Activated CD8-positive, alpha-beta T cell treated with anti-CD3 and anti-CD28 coated beads for 36 hours (primary cell): ENCODE measurements at regions of chr12 and their contacts with region 1.

Region 1: DNA sequence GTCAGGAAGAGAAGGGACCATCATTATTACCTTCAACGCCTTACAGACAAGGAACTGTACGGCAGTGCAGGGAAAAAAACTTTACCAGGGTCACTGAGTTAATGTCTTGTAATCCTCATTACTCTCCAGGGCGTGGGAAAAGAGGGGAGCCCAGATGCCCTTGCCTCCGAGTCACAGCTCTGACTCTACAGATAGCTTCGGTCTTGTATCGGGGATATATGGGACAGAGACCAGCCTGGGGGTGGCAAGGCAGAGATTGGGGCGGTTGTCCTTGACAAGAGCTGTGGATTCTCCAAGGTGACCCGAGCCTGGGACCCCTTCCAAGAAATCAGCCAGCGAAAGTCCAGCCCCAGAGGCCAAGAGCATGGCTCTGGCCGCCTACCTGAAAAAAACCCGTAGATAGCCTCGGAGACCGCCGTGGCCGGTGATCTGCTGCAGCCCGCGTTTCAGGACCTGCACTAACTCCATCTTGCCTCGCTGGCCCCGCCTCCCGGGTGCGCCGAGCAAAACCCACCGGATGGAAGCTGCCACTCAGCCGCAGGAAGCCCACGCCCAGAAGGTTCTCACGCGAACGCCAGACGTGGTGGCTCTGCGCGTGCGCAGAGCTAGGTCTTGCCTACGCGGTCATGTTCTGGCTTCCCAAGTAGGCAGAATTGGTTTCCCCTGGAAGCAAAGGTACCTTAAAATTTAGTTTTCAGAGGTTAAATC is at the start of gene NDUFA12:
- DNase-seq: peak; percentile 97
- ATAC-seq: peak; percentile 99
- H3K4me3 Mint-ChIP-seq: peak within 1 kb of the TSS; percentile 96
- H3K27ac Mint-ChIP-seq: peak within 1 kb of the TSS; percentile 94
- H3K4me1 Mint-ChIP-seq: peaks cover 46% of the 10 kb centered on the region
- H3K27me3 Mint-ChIP-seq: no peaks in the 10 kb centered on the region
- CTCF ChIP-seq: no peak
- total RNA-seq, gene NDUFA12: 123 to 128 TPM

Region 2: DNA sequence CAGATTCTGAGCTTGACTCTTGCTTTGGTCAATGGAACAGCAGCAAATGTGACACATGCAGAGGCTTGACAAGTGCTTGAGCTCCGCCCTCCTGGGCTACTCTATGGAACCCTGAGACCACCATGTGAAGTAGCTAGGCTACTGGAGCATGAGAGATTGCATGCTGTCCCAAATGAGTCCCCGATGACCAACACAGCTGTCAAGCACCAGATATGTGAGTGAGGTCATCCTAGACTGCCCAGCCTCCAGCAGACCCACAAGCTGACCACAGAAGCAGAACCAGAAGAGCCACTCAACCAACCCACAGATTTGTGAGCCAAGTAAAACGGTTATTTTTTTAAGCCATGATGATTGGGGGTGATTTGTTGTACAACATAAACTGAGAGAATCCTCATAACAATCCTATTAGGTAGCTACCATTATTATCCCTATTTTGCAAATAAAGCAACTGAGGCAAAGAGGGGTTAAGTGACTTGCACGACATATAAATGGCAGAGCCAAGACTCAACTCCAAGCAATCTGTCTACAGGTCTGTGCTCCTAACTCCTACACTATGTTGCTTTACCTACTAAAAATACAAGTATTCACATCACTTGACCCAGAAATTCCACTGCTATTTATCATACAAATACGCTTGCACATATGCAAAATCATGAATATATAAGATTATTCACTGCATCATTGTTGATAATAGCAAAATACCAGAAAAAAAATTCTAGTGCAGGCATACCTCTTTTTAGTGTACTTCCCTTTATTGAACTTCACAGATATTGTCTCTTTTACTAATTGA is 136.1 kb before region 1 on chr12:
- CTCF ChIA-PET with region 1: no interaction called
- POLR2A ChIA-PET with region 1: no interaction called
- intact Hi-C with region 1: no loop called
- DNase-seq: no peak
- ATAC-seq: no peak
- H3K4me3 Mint-ChIP-seq: no peak overlapping the region
- H3K27ac Mint-ChIP-seq: no peak overlapping the region
- H3K4me1 Mint-ChIP-seq: no peaks in the 10 kb centered on the region
- H3K27me3 Mint-ChIP-seq: peaks cover 19% of the 10 kb centered on the region
- CTCF ChIP-seq: no peak

Region 3: GRCh38 chr12:94990222-94990621 is 13.1 kb before region 1 on chr12:
- CTCF ChIA-PET with region 1: interaction called, 5 read pairs
- POLR2A ChIA-PET with region 1: interaction called, 10 read pairs
- intact Hi-C with region 1: no loop called
- DNase-seq: no peak
- ATAC-seq: no peak
- H3K4me3 Mint-ChIP-seq: no peak overlapping the region
- H3K27ac Mint-ChIP-seq: peak overlapping the region; percentile 30
- H3K4me1 Mint-ChIP-seq: peaks cover 56% of the 10 kb centered on the region
- H3K27me3 Mint-ChIP-seq: no peaks in the 10 kb centered on the region
- CTCF ChIP-seq: no peak

Region 4: GRCh38 chr12:95014554-95014953 is 11.2 kb after region 1 on chr12:
- CTCF ChIA-PET with region 1: no interaction called
- POLR2A ChIA-PET with region 1: interaction called, 10 read pairs
- intact Hi-C with region 1: no loop called
- DNase-seq: no peak
- ATAC-seq: no peak
- H3K4me3 Mint-ChIP-seq: no peak overlapping the region
- H3K27ac Mint-ChIP-seq: no peak overlapping the region
- H3K4me1 Mint-ChIP-seq: no peaks in the 10 kb centered on the region
- H3K27me3 Mint-ChIP-seq: no peaks in the 10 kb centered on the region
- CTCF ChIP-seq: no peak